PC-3 (cell line): ENCODE measurements at regions of chr21 and their contacts with region 1.

Region 1: GRCh38 chr21:39504230-39504629 is 52.5 kb downstream of the SH3BGR start:
- DNase-seq: no peak
- ATAC-seq: no peak
- H3K4me3 ChIP-seq: no peak overlapping the region
- H3K27ac ChIP-seq: no peak overlapping the region
- H3K4me1 ChIP-seq: no peaks in the 10 kb centered on the region
- H3K27me3 ChIP-seq: no peaks in the 10 kb centered on the region
- CTCF ChIP-seq: no peak

Region 2: GRCh38 chr21:38430401-38430984 is 1073.7 kb before region 1 on chr21:
- CTCF ChIA-PET with region 1: interaction called, 18 read pairs
- POLR2A ChIA-PET with region 1: no interaction called
- intact Hi-C with region 1: no loop called
- DNase-seq: no peak
- ATAC-seq: no peak
- H3K4me3 ChIP-seq: no peak overlapping the region
- H3K27ac ChIP-seq: no peak overlapping the region
- H3K4me1 ChIP-seq: no peaks in the 10 kb centered on the region; the same call in 1 of the 2 replicates
- H3K27me3 ChIP-seq: peaks cover 10% of the 10 kb centered on the region
- CTCF ChIP-seq: no peak

Region 3: GRCh38 chr21:39388038-39388810 is 116.0 kb before region 1 on chr21:
- CTCF ChIA-PET with region 1: no interaction called
- POLR2A ChIA-PET with region 1: no interaction called
- intact Hi-C with region 1: no loop called
- DNase-seq: peak; percentile 85
- ATAC-seq: peak; percentile 92
- H3K4me3 ChIP-seq: peak overlapping the region; percentile 70
- H3K27ac ChIP-seq: no peak overlapping the region
- H3K4me1 ChIP-seq: peaks cover 9% of the 10 kb centered on the region
- H3K27me3 ChIP-seq: no peaks in the 10 kb centered on the region
- CTCF ChIP-seq: peak; percentile 94

Region 4: DNA sequence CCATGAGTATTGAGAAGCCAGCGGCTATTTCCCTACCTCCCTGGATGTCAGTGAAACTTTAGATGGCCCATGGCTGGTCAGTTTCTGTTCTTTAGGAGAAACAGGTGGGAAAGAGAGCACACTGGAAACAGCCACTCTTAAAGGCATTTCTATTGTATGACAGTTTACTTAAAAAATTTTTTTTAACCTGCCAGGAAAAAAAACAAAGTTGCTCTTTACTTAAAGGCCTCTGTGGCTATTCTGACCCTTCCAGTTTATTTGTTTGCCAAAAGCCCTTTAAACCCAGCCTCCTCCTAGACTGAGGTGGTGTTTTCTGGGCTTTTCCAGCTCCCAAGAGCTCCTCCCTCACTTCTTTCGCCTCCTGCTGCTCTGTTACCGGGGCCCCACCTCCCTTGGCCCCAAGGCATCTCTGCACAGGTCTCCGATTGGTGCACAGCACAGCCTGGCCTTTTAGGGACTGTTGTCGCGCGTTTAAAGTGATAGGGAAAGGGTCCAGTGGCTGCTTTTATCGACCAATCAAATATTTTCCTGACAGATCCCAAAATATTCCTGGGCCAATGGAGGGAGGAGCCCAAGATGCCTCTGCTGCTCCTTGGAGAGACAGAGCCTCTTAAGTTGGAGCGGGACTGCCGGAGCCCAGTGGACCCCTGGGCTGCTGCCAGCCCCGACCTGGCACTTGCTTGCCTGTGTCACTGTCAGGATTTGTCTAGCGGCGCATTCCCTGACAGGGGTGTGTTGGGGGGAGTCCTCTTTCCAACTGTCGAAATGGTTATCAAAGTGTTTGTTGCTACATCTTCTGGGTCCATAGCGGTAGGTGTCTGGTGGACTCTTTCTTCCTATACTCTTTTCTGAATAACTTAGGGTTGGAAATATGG is 52.7 kb before region 1 on chr21 and contains the start of gene SH3BGR:
- CTCF ChIA-PET with region 1: no interaction called
- POLR2A ChIA-PET with region 1: no interaction called
- intact Hi-C with region 1: no loop called
- DNase-seq: peak; percentile 12
- ATAC-seq: peak; percentile 48
- H3K4me3 ChIP-seq: no peak within 1 kb of the TSS
- H3K27ac ChIP-seq: no peak within 1 kb of the TSS
- H3K4me1 ChIP-seq: no peaks in the 10 kb centered on the region
- H3K27me3 ChIP-seq: no peaks in the 10 kb centered on the region
- CTCF ChIP-seq: no peak
- total RNA-seq, gene SH3BGR: 0.40 and 1.3 TPM in 2 replicates

Region 5: DNA sequence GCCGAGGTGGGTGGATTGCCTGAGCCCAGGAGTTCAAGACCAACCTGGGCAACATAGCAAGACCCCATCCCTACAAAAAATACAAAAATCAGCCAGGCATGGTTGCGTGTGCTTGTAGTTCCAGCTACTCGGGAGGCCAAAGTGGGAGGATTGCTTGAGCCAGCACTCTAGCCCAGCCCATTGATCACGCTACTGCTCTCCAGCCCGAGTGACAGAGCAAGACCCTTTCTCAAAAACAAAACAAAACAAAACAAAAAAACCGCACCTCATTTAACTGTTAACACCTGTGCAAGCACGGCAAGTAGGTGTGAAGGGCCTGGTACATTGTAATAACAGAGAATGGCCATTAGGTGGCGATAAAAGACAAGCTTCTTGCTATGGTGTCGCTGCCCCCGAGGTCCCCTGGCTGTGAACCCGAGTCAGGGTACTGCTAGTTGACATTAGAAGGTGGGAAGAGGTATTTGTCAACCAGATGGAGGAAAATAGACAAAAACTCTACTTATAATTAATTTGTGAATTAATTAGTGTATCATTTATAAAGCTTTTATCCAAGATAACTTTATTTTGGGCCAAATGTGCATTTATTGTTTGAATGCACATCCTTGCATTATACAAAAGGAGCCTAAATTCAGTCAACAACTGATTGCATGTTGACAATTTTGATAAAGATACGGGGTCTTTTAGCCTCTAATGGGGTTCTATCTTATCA is 14.1 kb after region 1 on chr21:
- CTCF ChIA-PET with region 1: no interaction called
- POLR2A ChIA-PET with region 1: no interaction called
- intact Hi-C with region 1: no loop called
- DNase-seq: peak; percentile 82
- ATAC-seq: peak; percentile 97
- H3K4me3 ChIP-seq: no peak overlapping the region
- H3K27ac ChIP-seq: no peak overlapping the region
- H3K4me1 ChIP-seq: peaks cover 5% of the 10 kb centered on the region; the same call in 1 of the 2 replicates
- H3K27me3 ChIP-seq: no peaks in the 10 kb centered on the region
- CTCF ChIP-seq: peak; percentile 96